Gastrocnemius medialis (tissue), 4 donors: ENCODE measurements at regions of chr5 and their contacts with region 1.

Region 1: DNA sequence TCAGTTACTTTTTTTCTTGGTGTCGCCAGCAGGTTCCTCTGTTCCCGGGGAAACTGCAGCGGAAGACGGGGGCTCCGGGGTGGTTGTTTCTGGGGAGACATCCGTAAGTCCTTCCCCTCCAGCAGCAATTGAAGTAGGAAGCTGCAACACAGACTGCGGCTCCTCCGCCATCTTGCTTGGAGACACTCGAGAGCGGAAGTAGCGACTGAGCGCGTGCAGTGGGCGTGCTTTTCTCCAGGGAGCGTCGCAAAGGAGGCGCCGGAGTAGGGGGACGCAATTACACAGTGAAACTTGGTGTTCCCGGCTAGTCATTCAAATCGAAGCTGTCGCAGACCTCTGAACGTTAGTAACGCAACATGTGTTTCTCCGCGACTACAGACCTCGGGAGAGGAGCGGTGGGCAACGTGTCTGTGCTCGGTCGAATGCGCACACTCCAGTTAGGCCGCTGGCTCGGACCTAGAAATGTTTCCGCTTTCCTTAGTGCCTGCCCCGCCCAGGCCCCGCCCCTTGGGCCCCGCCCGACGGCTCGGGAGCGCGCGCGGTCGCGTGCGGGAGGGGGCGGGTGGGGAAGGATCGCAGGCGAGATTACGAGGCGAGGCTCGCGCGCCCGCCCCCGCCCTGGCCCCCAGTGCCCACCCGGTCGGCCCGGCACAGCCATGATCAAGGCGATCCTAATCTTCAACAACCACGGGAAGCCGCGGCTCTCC is at the starts of genes AP3S1 and ATG12:
- DNase-seq: peak; percentile 88
- ATAC-seq: peak; percentile 94 to 97
- H3K4me3 ChIP-seq: peak within 1 kb of the TSS; percentile 73 to 92 (median 86)
- H3K27ac ChIP-seq: peak within 1 kb of the TSS; percentile 91 to 96 (median 94)
- H3K4me1 ChIP-seq: peaks cover 37 to 52% of the 10 kb centered on the region in 2 donors
- H3K27me3 ChIP-seq: no peaks in the 10 kb centered on the region
- CTCF ChIP-seq: peak in 1 of 5 experiments; percentile 17
- POLR2A ChIP-seq: peak; percentile 83 to 87
- total RNA-seq, gene AP3S1: 13.0 to 121 (median 25.5) TPM
- total RNA-seq, gene ATG12: 10.3 to 35.1 (median 23.6) TPM

Region 2: GRCh38 chr5:114447084-114447773 is 1394.3 kb before region 1 on chr5:
- in situ Hi-C with region 1: no loop called
- intact Hi-C with region 1: no loop called
- DNase-seq: no peak
- ATAC-seq: no peak
- H3K4me3 ChIP-seq: no peak overlapping the region
- H3K27ac ChIP-seq: no peak overlapping the region
- H3K4me1 ChIP-seq: peaks cover 0 to 6% of the 10 kb centered on the region in 2 donors
- H3K27me3 ChIP-seq: no peaks in the 10 kb centered on the region
- CTCF ChIP-seq: no peak
- POLR2A ChIP-seq: no peak

Region 3: GRCh38 chr5:115296124-115297022 is 545.2 kb before region 1 on chr5 and contains the start of gene CCDC112:
- in situ Hi-C with region 1: loop called in 1 of 4 experiments (anchors 25 kb)
- intact Hi-C with region 1: no loop called
- DNase-seq: peak; percentile 45 to 55
- ATAC-seq: peak; percentile 67 to 81
- H3K4me3 ChIP-seq: peak within 1 kb of the TSS; percentile 71 to 91 (median 79)
- H3K27ac ChIP-seq: peak within 1 kb of the TSS in 3 of 4 donors; percentile 32 to 61 (median 39)
- H3K4me1 ChIP-seq: peaks cover 7 to 9% of the 10 kb centered on the region in 2 donors
- H3K27me3 ChIP-seq: no peaks in the 10 kb centered on the region
- CTCF ChIP-seq: no peak
- POLR2A ChIP-seq: peak in 1 of 2 donors; percentile 37
- total RNA-seq, gene CCDC112: 2.1 to 4.8 (median 3.8) TPM

Region 4: GRCh38 chr5:115544436-115545350 is 296.8 kb before region 1 on chr5 and contains the start of gene FEM1C:
- in situ Hi-C with region 1: no loop called
- intact Hi-C with region 1: loop called (anchors 5 kb)
- DNase-seq: peak; percentile 97
- ATAC-seq: peak; percentile 86 to 88
- H3K4me3 ChIP-seq: peak within 1 kb of the TSS; percentile 85 to 96 (median 88)
- H3K27ac ChIP-seq: peak within 1 kb of the TSS; percentile 96 to 99 (median 98)
- H3K4me1 ChIP-seq: peaks cover 18 to 21% of the 10 kb centered on the region in 2 donors
- H3K27me3 ChIP-seq: no peaks in the 10 kb centered on the region
- CTCF ChIP-seq: no peak
- POLR2A ChIP-seq: peak; percentile 99
- total RNA-seq, gene FEM1C: 18.9 to 39.4 (median 33.7) TPM

Region 5: DNA sequence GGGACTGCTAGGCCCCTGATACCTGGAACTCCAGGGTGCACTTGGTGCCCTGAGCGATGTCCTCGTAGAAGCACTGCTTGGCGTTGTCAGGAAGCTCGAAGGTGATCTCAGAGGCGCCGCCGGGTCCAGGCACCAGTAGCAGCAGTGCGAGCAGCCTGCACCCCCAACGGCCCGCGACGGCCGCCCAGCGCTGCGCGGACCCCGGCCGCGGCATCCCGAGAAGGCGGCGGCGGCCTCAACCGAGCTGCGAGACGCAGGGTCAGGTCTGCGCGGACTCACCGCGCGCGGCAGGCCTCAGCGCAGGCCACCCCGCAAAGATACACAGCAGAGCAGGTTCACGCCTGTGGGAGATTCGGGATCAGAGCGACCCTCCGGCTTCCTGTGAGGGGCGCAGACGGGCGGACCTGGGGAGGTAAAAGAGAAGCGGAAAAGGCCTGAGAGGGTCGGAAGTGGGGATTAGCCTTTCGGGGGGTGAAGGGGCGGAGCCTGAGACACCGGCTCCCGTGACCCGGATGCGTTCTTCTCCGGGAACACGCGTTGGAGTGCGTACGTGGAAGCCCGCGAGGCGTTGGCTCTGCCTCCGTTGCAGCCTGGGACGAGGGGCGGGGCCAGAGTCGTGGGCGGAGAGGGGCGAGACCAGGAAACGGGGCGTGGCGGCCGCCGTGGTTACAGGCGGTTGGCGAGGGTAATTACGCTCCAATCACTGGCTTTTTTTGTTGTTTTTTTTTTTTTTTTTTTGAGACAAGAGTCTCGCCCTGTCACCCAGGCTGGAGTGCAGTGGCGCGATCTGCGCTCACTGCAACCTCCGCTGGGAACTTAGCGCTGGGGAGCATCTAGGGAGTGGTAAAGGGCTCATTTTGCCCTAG is 215.7 kb before region 1 on chr5 and contains the start of gene TMED7:
- in situ Hi-C with region 1: loop called in 1 of 4 experiments (anchors 10 kb)
- intact Hi-C with region 1: loop called (anchors 2 kb)
- DNase-seq: peak; percentile 99
- ATAC-seq: peak; percentile 97
- H3K4me3 ChIP-seq: peak within 1 kb of the TSS; percentile 75 to 99 (median 84)
- H3K27ac ChIP-seq: peak within 1 kb of the TSS; percentile 87 to 97 (median 95)
- H3K4me1 ChIP-seq: peaks cover 35% of the 10 kb centered on the region in 2 donors
- H3K27me3 ChIP-seq: no peaks in the 10 kb centered on the region
- CTCF ChIP-seq: peak in 2 of 5 experiments; percentile 12 to 38
- POLR2A ChIP-seq: peak; percentile 83 to 92
- total RNA-seq, gene TMED7: 53.1 to 122 (median 68.6) TPM

Region 6: GRCh38 chr5:115798252-115798651 is 43.3 kb before region 1 on chr5:
- in situ Hi-C with region 1: no loop called
- intact Hi-C with region 1: no loop called
- DNase-seq: no peak
- ATAC-seq: peak; percentile 14 to 39
- H3K4me3 ChIP-seq: no peak overlapping the region
- H3K27ac ChIP-seq: no peak overlapping the region
- H3K4me1 ChIP-seq: no peaks in the 10 kb centered on the region
- H3K27me3 ChIP-seq: no peaks in the 10 kb centered on the region
- CTCF ChIP-seq: no peak
- POLR2A ChIP-seq: no peak

Region 7: DNA sequence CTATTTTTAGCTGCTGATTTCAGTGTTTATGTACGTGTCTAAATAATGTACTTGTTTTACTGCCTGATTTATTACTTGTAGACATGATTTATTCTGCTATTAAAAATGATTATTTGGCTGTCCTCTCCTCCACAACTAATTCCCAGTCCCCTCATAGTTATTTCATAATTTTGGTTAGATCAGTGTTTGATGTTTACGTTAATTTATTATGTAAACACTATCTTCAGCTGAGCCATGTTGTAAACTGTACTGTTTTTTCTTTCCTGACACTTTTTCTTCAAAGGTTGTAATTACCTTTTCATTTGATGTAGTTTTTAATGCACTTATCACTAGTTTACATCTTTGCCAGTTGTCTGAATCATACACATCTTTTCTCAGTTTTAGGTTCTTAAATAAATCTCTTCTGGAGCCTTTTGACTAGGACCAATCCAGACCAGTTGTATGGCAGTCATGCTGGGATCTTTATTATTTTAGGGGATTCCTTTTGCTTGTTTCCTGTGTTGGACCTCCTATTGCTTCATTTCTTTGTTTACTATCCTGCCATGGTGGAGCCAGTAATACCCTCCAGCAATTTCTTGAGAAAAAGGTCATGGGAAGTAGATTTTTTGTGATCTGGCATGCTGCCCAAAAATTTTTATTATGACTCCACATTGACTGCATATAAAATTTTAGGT is 16.2 kb after region 1 on chr5:
- in situ Hi-C with region 1: no loop called
- intact Hi-C with region 1: loop called (anchors 2 kb)
- DNase-seq: no peak
- ATAC-seq: peak in 1 of 2 donors; percentile 38
- H3K4me3 ChIP-seq: no peak overlapping the region
- H3K27ac ChIP-seq: no peak overlapping the region
- H3K4me1 ChIP-seq: peaks cover 32 to 35% of the 10 kb centered on the region in 2 donors
- H3K27me3 ChIP-seq: no peaks in the 10 kb centered on the region
- CTCF ChIP-seq: no peak
- POLR2A ChIP-seq: no peak

Region 8: DNA sequence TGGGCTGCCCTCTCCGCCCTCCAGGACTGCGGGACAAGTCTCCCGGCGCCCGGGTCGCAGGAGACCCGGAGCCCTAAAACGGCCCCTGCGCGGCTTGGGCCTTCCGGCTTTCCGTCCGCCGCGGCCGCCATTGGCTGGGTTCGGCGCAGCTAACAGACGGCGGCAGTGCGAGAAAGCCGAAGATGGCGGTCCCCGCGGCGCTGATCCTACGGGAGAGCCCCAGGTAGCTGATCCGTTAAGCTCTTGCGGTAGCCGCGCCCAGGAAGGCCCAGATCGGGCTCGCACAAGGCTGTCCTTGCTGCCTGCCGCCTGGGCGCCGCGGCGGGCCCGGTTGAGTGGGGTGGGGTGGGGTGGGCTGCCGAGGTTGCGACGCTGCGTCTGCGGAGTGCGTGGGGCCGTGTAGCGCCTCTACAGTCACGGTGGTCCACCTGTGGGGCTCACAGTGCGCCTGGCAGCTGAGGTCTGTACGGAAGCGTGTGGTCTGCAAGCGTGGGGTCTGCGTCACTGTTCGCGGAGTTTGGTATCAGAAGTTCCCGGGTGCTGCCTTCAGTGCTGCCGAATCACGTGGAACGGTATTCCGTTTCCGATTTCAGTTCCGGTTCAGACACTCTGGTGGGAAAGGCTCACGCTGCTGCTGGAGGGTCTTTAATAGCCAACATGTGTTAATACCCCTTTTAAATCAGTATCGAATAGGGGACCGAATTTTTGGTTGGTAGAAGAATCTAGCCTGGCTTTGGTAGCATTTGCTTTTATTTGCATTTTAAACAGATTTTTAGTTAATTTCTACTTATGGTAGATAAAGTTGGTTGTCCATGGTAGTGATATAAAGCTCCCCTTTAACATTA is 243.6 kb after region 1 on chr5 and contains the start of gene COMMD10:
- in situ Hi-C with region 1: no loop called
- intact Hi-C with region 1: loop called (anchors 5 kb)
- DNase-seq: peak; percentile 59 to 78
- ATAC-seq: peak; percentile 95 to 99
- H3K4me3 ChIP-seq: peak within 1 kb of the TSS; percentile 88 to 98 (median 94)
- H3K27ac ChIP-seq: peak within 1 kb of the TSS; percentile 89 to 96 (median 95)
- H3K4me1 ChIP-seq: peaks cover 20 to 22% of the 10 kb centered on the region in 2 donors
- H3K27me3 ChIP-seq: no peaks in the 10 kb centered on the region
- CTCF ChIP-seq: no peak
- POLR2A ChIP-seq: peak; percentile 55 to 64
- total RNA-seq, gene COMMD10: 10.6 to 34.6 (median 15.2) TPM